ENCODE measurements at regions of chr14 and their contacts with region 1.

Region 1: GRCh38 chr14:67787673-67788072 is 28.7 kb downstream of the ZFYVE26 start:
- DNase-seq: no peak
- H3K4me3 ChIP-seq: no peak overlapping the region
- H3K27ac ChIP-seq: no peak overlapping the region
- H3K4me1 ChIP-seq: no peaks in the 10 kb centered on the region
- H3K27me3 ChIP-seq: no peaks in the 10 kb centered on the region
- CTCF ChIP-seq: no peak

Region 2: DNA sequence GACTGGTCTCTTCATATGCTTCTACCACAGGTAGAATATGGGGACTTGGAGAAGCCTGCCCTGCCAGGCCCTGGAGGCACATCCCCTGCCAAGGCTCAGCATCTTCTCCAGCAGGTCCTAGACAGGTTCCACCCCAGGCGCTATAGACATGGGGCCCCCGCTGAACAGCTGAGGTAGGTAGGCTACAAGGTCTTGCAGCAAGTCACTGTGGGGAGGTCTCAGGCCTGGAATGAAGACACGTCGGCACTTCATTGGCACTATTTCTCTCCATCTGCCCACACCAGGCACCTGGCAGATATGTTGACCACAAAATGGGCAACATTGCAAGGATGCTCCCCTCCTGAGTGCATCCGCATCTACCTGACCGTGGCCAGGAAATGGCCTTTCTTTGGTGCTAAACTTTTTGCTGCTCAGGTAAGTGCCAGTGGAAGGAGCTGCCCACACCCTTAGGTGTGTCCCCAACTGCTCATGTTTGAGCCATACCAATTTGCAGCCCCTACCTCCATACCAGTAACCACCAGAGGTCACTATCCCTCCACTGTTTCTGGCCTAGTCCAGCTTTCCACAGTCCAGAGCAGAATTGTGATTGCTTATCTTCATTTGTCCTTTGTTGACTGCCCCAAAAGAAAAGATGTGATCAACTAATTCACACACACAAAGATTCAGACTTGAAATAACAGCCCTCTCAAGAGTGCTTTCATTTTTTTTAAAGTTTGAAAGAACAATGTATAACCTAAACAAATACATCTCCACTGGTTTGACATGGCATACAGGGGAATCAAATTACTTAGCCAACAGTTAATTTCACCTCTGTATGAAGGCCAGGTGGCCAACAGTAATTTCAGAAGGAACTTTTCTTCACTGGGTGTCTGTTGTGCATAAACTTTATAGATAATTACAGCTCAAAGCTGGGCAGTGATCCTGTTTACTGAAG is 203.7 kb before region 1 on chr14:
- CTCF ChIA-PET with region 1: no interaction called
- POLR2A ChIA-PET with region 1: no interaction called
- intact Hi-C with region 1: no loop called
- DNase-seq: peak; percentile 42 to 60
- H3K4me3 ChIP-seq: no peak overlapping the region
- H3K27ac ChIP-seq: no peak overlapping the region
- H3K4me1 ChIP-seq: no peaks in the 10 kb centered on the region
- H3K27me3 ChIP-seq: no peaks in the 10 kb centered on the region
- CTCF ChIP-seq: peak; percentile 85

Region 3: GRCh38 chr14:67619446-67620216 is 168.0 kb before region 1 on chr14 and contains the start of gene ARG2:
- CTCF ChIA-PET with region 1: no interaction called
- POLR2A ChIA-PET with region 1: interaction called, 12 read pairs
- intact Hi-C with region 1: no loop called
- DNase-seq: peak; percentile 98 to 99
- H3K4me3 ChIP-seq: peak within 1 kb of the TSS; percentile 73
- H3K27ac ChIP-seq: peak within 1 kb of the TSS; percentile 36
- H3K4me1 ChIP-seq: peaks cover 27% of the 10 kb centered on the region
- H3K27me3 ChIP-seq: no peaks in the 10 kb centered on the region
- CTCF ChIP-seq: no peak
- total RNA-seq, gene ARG2: 8.6 and 10.2 TPM in 2 replicates